Adrenal gland (tissue), 19 donors: ENCODE measurements at regions of chr1 and their contacts with region 1.

Region 1: GRCh38 chr1:22641906-22642636 is 1.4 kb upstream of the C1QC start:
- DNase-seq: peak; percentile 77 to 89 (median 86)
- H3K4me3 ChIP-seq: no peak overlapping the region
- H3K27ac ChIP-seq: peak overlapping the region in 1 of 5 donors; percentile 14
- H3K4me1 ChIP-seq: peaks cover 0 to 7% of the 10 kb centered on the region in 2 donors
- H3K27me3 ChIP-seq: no peaks in the 10 kb centered on the region
- CTCF ChIP-seq: peak; percentile 82 to 97 (median 95)
- POLR2A ChIP-seq: no peak

Region 2: DNA sequence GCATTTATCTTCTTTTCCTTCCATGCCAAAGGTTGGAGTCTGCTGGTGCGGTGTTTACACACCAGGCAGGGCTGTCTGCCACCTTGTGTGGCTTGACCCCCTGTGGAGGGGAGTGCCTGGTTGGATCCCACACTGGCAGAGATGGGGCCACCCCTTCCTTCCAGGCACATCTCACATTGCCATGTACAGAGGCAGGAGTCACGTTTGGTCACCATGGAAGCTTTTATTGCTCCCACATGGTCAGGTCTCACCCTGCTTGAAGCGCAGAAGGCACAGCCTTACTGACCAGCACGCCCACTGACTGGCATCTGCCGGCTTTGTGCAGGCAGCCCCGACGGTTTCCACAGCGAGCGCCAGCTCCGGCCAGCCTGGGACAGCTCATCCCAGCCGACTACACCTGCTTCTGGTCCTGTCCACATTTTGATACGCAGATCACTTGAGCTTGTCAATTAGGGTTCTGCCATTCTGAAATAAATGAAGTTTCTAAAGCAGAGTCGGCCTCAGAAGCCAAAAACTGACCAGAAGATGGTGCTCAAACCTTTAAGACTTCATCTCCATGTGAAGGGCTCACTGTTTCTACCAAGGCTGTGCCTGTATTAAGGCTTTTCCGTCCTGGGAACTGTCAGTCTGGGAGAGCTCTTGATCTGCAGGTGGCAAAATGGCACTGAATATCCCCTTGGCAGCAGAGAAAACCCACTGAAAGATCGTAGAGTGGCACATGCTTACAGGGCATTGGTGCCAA is 114.3 kb before region 1 on chr1:
- intact Hi-C with region 1: loop called (anchors 5 kb)
- DNase-seq: no peak
- H3K4me3 ChIP-seq: no peak overlapping the region
- H3K27ac ChIP-seq: peak overlapping the region in 1 of 5 donors; percentile 44
- H3K4me1 ChIP-seq: peaks cover 0 to 15% of the 10 kb centered on the region in 2 donors
- H3K27me3 ChIP-seq: no peaks in the 10 kb centered on the region
- CTCF ChIP-seq: peak in 3 of 6 experiments; percentile 13 to 27 (median 26)
- POLR2A ChIP-seq: no peak